Naive thymus-derived CD4-positive, alpha-beta T cell (primary cell): ENCODE measurements at regions of chr18 and their contacts with region 1.

Region 1: GRCh38 chr18:74081966-74082741 is 65.5 kb downstream of the FBXO15 start:
- DNase-seq: peak; percentile 37 to 80 (median 71)
- ATAC-seq: peak; percentile 94
- H3K4me3 ChIP-seq: peak overlapping the region; percentile 32
- H3K4me3 Mint-ChIP-seq: peak overlapping the region; percentile 71 to 96 (median 84)
- H3K27ac ChIP-seq: peak overlapping the region; percentile 74
- H3K27ac Mint-ChIP-seq: peak overlapping the region; percentile 93 to 98 (median 96)
- H3K4me1 ChIP-seq: peaks cover 0 to 16% of the 10 kb centered on the region in 2 donors
- H3K4me1 Mint-ChIP-seq: peaks cover 7 to 24% (median 21%) of the 10 kb centered on the region in 7 donors
- H3K27me3 ChIP-seq: no peaks in the 10 kb centered on the region
- H3K27me3 Mint-ChIP-seq: no peaks in the 10 kb centered on the region

Region 2: DNA sequence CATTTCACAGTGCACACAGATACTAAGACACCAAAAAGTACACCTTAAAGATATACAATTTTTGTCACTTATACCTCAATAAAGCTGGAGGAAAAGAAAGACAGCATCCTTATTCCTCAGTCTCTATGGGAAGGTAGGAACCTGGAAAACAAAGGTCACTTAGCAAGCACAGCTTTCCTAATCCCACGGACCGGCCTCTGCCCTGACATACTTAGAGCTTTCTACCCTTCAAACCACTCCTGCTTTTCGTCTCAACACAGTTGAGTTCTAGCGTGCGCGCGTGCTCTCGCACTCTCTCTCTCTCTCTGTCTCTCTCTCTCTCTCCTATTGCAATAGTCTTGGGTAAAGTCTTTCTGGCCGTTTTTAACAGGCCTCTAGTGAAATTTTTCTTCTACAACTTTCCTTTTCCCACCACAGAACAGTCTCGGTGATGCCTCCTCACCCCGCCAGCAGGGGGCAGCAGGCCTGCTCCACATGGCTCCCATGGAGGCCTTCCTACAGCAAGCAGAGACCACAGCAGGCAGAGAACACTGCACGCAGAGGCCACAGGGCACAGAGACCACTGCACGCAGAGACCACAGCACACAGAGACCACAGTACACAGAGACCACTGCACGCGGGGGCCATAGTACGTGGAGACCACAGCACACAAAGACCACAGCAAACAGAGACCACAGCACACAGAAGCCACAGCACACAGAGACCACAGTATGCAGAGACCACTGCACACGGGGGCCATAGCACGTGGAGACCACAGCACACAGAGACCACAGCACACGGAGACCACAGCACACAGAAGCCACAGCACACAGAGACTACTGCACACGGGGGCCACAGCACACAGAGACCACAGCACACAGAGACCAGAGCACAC is 41.5 kb before region 1 on chr18:
- CTCF ChIA-PET with region 1: interaction called, 21 read pairs
- POLR2A ChIA-PET with region 1: interaction called, 3 read pairs
- intact Hi-C with region 1: loop called (anchors 1 to 5 kb)
- DNase-seq: peak; percentile 32 to 81 (median 62)
- ATAC-seq: peak; percentile 68
- H3K4me3 ChIP-seq: no peak overlapping the region
- H3K4me3 Mint-ChIP-seq: no peak overlapping the region
- H3K27ac ChIP-seq: no peak overlapping the region
- H3K27ac Mint-ChIP-seq: no peak overlapping the region
- H3K4me1 ChIP-seq: no peaks in the 10 kb centered on the region
- H3K4me1 Mint-ChIP-seq: peaks cover 0 to 5% (median 0%) of the 10 kb centered on the region in 7 donors
- H3K27me3 ChIP-seq: no peaks in the 10 kb centered on the region
- H3K27me3 Mint-ChIP-seq: no peaks in the 10 kb centered on the region

Region 3: GRCh38 chr18:74097598-74098202 is 15.5 kb after region 1 on chr18:
- CTCF ChIA-PET with region 1: interaction called, 23 read pairs
- POLR2A ChIA-PET with region 1: interaction called, 6 read pairs
- intact Hi-C with region 1: no loop called
- DNase-seq: no peak
- ATAC-seq: no peak
- H3K4me3 ChIP-seq: no peak overlapping the region
- H3K4me3 Mint-ChIP-seq: no peak overlapping the region
- H3K27ac ChIP-seq: no peak overlapping the region
- H3K27ac Mint-ChIP-seq: no peak overlapping the region
- H3K4me1 ChIP-seq: no peaks in the 10 kb centered on the region
- H3K4me1 Mint-ChIP-seq: peaks cover 0 to 11% (median 0%) of the 10 kb centered on the region in 7 donors
- H3K27me3 ChIP-seq: no peaks in the 10 kb centered on the region
- H3K27me3 Mint-ChIP-seq: peaks cover 0 to 5% (median 4%) of the 10 kb centered on the region in 5 donors

Region 4: GRCh38 chr18:74147779-74148542 is 65.8 kb after region 1 on chr18 and contains the starts of genes FBXO15 and TIMM21:
- CTCF ChIA-PET with region 1: no interaction called
- POLR2A ChIA-PET with region 1: interaction called, 3 read pairs
- intact Hi-C with region 1: loop called (anchors 1 kb)
- DNase-seq: peak; percentile 92 to 97 (median 96)
- ATAC-seq: peak; percentile 91
- H3K4me3 ChIP-seq: peak within 1 kb of the TSS; percentile 82
- H3K4me3 Mint-ChIP-seq: peak within 1 kb of the TSS; percentile 95 to 100 (median 97)
- H3K27ac ChIP-seq: peak within 1 kb of the TSS; percentile 92
- H3K27ac Mint-ChIP-seq: peak within 1 kb of the TSS; percentile 98 to 100 (median 99)
- H3K4me1 ChIP-seq: peaks cover 15 to 25% of the 10 kb centered on the region in 2 donors
- H3K4me1 Mint-ChIP-seq: peaks cover 23 to 60% (median 55%) of the 10 kb centered on the region in 7 donors
- H3K27me3 ChIP-seq: no peaks in the 10 kb centered on the region
- H3K27me3 Mint-ChIP-seq: peaks cover 0 to 7% (median 0%) of the 10 kb centered on the region in 5 donors
- total RNA-seq, gene FBXO15: 1.1 to 4.9 (median 1.3) TPM
- total RNA-seq, gene TIMM21: 9.7 to 30.2 (median 27.9) TPM

Region 5: DNA sequence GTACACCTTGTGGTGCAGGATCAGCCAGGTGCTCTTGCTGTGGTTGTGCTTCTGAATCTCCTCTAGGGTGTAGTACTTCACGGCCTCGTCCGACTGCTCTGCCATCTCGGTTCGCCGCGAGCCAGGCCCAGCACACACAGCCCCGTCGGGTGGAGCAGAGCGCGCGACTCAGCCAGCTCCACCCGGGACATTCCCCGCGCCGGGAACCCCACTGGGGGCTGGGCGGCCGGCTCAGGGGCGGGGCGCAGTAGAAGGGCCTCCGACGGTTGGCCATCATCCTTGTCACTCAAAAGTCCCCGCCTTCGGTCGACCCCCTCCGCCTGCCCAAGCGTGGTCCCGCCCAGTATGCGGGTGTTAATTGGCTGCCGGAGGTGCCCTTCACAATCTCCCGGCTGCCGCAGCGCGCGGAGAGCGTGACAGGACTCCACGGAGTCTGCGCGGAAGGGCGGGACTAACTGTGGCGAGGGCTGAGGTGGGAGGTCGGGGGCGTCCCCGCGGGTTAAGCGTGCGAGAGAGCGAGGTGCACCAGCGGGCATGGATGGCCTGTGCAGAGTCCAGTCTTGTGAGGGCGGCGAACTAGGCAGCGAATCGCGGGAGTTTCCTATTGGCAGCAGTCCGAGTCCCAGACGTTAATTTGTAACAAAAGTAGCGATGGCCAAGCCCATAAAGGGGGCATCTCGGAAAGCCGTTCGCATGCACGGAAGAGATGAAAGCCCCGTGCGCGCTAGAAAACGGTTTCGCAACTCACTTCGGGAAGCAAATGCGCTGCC is 209.8 kb after region 1 on chr18 and contains the start of gene CYB5A:
- CTCF ChIA-PET with region 1: no interaction called
- POLR2A ChIA-PET with region 1: interaction called, 3 read pairs
- intact Hi-C with region 1: loop called (anchors 1 to 5 kb)
- DNase-seq: peak; percentile 97 to 99 (median 98)
- ATAC-seq: peak; percentile 99
- H3K4me3 ChIP-seq: peak within 1 kb of the TSS; percentile 91
- H3K4me3 Mint-ChIP-seq: peak within 1 kb of the TSS in 2 of 10 donors; percentile 92 to 94
- H3K27ac ChIP-seq: peak within 1 kb of the TSS; percentile 72
- H3K27ac Mint-ChIP-seq: peak within 1 kb of the TSS in 8 of 9 donors; percentile 56 to 95 (median 87)
- H3K4me1 ChIP-seq: peaks cover 0 to 3% of the 10 kb centered on the region in 2 donors
- H3K4me1 Mint-ChIP-seq: peaks cover 0 to 30% (median 15%) of the 10 kb centered on the region in 7 donors
- H3K27me3 ChIP-seq: no peaks in the 10 kb centered on the region
- H3K27me3 Mint-ChIP-seq: peaks cover 0 to 12% (median 0%) of the 10 kb centered on the region in 5 donors
- total RNA-seq, gene CYB5A: 13.9 to 36.9 (median 22.6) TPM

Region 6: GRCh38 chr18:74551936-74552555 is 469.9 kb after region 1 on chr18:
- CTCF ChIA-PET with region 1: interaction called, 4 read pairs
- POLR2A ChIA-PET with region 1: no interaction called
- intact Hi-C with region 1: loop called in 1 of 2 experiments (anchors 1 kb)
- DNase-seq: peak; percentile 39 to 69 (median 63)
- ATAC-seq: peak; percentile 97
- H3K4me3 ChIP-seq: no peak overlapping the region
- H3K4me3 Mint-ChIP-seq: no peak overlapping the region
- H3K27ac ChIP-seq: no peak overlapping the region
- H3K27ac Mint-ChIP-seq: peak overlapping the region in 2 of 9 donors; percentile 3 to 70
- H3K4me1 ChIP-seq: no peaks in the 10 kb centered on the region
- H3K4me1 Mint-ChIP-seq: peaks cover 0 to 6% (median 0%) of the 10 kb centered on the region in 7 donors
- H3K27me3 ChIP-seq: no peaks in the 10 kb centered on the region
- H3K27me3 Mint-ChIP-seq: peaks cover 10 to 14% (median 13%) of the 10 kb centered on the region in 5 donors